Calu3 (cell line): ENCODE measurements at regions of chr6 and their contacts with region 1.

Region 1: DNA sequence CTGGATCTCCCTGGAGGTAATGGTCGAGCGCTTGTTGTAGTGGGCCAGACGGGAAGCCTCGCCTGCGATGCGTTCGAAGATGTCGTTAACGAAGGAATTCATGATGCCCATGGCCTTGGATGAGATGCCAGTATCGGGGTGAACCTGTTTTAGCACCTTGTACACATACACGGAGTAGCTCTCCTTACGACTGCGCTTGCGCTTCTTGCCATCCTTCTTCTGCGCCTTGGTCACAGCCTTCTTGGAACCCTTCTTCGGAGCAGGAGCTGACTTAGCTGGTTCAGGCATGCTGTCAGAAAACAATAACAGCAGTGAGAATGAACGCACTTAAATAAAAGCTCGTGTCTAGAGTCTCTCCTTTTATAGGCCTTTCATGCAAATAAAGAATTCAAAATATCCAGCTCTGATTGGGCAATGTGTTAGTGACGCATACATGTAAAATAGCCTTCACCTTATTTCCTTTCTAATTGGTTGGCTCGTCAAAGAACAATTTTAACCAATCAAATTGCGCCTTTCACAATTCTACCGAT is 129.2 kb downstream of the HFE start:
- DNase-seq: peak; percentile 86
- H3K4me3 Mint-ChIP-seq: no peak overlapping the region
- H3K27ac Mint-ChIP-seq: no peak overlapping the region
- H3K4me1 Mint-ChIP-seq: peaks cover 53% of the 10 kb centered on the region
- H3K27me3 Mint-ChIP-seq: no peaks in the 10 kb centered on the region
- CTCF ChIP-seq: no peak

Region 2: GRCh38 chr6:26122793-26123674 is 93.4 kb before region 1 on chr6:
- CTCF ChIA-PET with region 1: interaction called, 8 read pairs
- intact Hi-C with region 1: loop called (anchors 5 kb)
- DNase-seq: peak; percentile 97
- H3K4me3 Mint-ChIP-seq: peak overlapping the region; percentile 98
- H3K27ac Mint-ChIP-seq: peak overlapping the region; percentile 100
- H3K4me1 Mint-ChIP-seq: peaks cover 28% of the 10 kb centered on the region
- H3K27me3 Mint-ChIP-seq: peaks cover 14% of the 10 kb centered on the region
- CTCF ChIP-seq: no peak

Region 3: GRCh38 chr6:26183581-26184366 is 32.6 kb before region 1 on chr6:
- CTCF ChIA-PET with region 1: interaction called, 10 read pairs
- intact Hi-C with region 1: loop called (anchors 5 kb)
- DNase-seq: peak; percentile 64
- H3K4me3 Mint-ChIP-seq: peak overlapping the region; percentile 78
- H3K27ac Mint-ChIP-seq: peak overlapping the region; percentile 84
- H3K4me1 Mint-ChIP-seq: peaks cover 38% of the 10 kb centered on the region
- H3K27me3 Mint-ChIP-seq: no peaks in the 10 kb centered on the region
- CTCF ChIP-seq: no peak

Region 4: DNA sequence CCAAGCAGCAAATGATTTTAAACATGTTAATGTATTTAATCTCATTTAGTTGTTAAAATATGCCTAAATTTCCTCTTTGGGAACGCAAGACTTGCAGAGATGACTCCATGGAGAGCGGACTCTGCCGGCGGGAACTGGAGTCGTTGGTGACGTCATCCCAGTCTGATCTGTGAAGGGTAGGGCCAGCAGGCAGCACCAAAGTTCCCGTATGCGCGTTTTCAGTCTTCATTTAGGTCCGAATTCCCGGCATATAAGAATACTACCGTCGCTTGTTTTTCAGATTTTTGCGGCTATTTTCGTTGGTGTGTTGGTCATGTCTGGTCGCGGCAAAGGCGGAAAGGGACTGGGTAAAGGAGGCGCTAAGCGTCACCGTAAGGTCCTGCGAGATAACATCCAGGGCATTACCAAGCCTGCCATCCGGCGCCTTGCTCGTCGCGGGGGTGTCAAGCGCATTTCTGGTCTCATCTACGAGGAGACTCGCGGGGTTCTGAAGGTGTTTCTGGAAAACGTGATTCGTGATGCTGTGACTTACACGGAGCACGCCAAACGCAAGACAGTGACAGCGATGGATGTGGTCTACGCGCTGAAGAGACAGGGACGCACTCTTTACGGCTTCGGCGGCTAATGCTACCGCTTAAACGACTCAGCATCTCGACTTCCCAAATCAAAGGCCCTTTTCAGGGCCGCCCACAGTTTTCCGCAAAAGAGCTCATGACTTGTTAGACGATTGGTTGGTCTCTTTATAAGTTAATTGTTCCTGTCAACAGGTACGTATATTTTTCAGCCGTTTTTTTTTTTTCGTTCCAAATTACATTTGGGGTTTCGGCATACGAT is 11.9 kb before region 1 on chr6:
- CTCF ChIA-PET with region 1: interaction called, 21 read pairs
- intact Hi-C with region 1: loop called (anchors 1 kb)
- DNase-seq: peak; percentile 94
- H3K4me3 Mint-ChIP-seq: no peak overlapping the region
- H3K27ac Mint-ChIP-seq: no peak overlapping the region
- H3K4me1 Mint-ChIP-seq: peaks cover 19% of the 10 kb centered on the region
- H3K27me3 Mint-ChIP-seq: no peaks in the 10 kb centered on the region
- CTCF ChIP-seq: no peak

Region 5: DNA sequence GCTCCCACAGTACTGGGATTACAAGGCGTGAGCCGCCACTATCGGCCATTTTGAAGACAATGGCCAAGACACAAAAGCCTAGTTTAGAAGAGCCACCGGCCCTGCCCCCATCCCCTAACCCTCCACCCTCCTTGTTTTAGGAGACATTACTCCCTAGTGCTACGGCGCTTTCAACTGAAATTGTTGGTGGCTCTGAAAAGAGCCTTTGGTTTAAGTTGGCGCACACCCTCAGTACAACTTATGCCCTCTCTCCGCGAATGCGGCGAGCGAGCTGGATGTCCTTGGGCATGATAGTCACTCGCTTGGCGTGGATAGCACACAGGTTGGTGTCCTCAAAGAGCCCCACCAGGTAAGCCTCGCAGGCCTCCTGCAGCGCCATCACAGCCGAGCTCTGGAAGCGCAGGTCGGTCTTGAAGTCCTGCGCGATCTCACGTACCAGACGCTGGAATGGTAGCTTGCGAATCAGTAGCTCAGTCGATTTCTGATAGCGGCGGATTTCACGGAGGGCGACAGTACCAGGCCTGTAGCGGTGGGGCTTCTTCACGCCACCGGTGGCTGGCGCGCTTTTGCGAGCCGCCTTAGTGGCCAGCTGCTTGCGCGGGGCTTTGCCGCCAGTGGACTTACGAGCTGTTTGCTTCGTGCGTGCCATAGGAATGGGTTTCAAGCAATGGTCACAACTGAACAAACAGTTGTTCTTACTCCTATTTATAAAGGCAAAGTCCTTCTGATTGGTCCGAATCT is 33.7 kb after region 1 on chr6:
- CTCF ChIA-PET with region 1: interaction called, 25 read pairs
- intact Hi-C with region 1: no loop called
- DNase-seq: peak; percentile 81
- H3K4me3 Mint-ChIP-seq: peak overlapping the region; percentile 92
- H3K27ac Mint-ChIP-seq: peak overlapping the region; percentile 93
- H3K4me1 Mint-ChIP-seq: peaks cover 18% of the 10 kb centered on the region
- H3K27me3 Mint-ChIP-seq: no peaks in the 10 kb centered on the region
- CTCF ChIP-seq: peak; percentile 35

Region 6: DNA sequence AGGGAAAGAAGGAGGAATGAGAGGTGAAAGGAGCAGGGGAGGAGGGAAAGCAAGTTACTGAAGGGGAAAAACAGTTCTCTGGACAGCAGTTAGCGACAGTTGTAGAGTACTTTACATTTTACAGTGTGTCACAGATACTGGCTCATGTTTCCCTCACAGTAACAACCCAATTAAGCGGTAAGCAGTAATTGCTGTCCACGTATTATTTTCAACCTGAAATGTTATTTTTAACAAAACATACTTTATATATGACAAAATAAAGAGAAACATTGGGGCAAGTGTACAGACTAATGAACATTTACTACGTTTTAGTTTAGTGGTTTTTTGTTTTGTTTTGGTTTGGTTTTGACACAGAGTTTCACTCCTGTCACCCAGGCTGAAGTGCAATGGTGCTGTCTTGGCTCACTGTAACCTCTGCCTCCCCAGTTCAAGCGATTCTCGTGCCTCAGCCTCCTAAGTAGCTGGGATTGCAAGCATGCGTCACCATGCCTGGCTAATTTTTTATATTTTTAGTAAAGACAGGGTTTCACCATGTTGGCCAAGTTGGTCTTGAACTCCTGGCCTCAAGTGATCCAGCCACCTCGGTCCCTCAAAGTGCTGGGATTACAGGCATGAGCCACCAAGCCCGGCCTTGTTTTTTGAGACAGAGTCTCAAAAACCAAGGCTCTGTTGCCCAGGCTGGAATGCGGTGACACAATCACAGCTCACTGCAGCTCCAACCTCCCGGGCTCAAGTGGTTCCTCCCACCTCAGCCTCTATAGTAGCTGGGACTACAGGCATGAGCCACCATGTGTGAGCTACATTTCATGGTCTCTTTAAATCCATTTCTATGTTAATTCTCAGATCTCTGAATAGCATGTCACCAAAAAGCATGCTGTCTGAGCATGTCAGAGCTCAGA is 125.9 kb after region 1 on chr6:
- CTCF ChIA-PET with region 1: no interaction called
- intact Hi-C with region 1: no loop called
- DNase-seq: no peak
- H3K4me3 Mint-ChIP-seq: peak overlapping the region; percentile 3
- H3K27ac Mint-ChIP-seq: no peak overlapping the region
- H3K4me1 Mint-ChIP-seq: no peaks in the 10 kb centered on the region
- H3K27me3 Mint-ChIP-seq: no peaks in the 10 kb centered on the region
- CTCF ChIP-seq: no peak

Region 7: GRCh38 chr6:26473758-26474438 is 257.5 kb after region 1 on chr6:
- CTCF ChIA-PET with region 1: no interaction called
- intact Hi-C with region 1: no loop called
- DNase-seq: peak; percentile 79
- H3K4me3 Mint-ChIP-seq: peak overlapping the region; percentile 73
- H3K27ac Mint-ChIP-seq: peak overlapping the region; percentile 94
- H3K4me1 Mint-ChIP-seq: peaks cover 25% of the 10 kb centered on the region
- H3K27me3 Mint-ChIP-seq: no peaks in the 10 kb centered on the region
- CTCF ChIP-seq: no peak